Motor neuron (in vitro differentiated cells): ENCODE measurements at regions of chr17 and their contacts with region 1.

Region 1: DNA sequence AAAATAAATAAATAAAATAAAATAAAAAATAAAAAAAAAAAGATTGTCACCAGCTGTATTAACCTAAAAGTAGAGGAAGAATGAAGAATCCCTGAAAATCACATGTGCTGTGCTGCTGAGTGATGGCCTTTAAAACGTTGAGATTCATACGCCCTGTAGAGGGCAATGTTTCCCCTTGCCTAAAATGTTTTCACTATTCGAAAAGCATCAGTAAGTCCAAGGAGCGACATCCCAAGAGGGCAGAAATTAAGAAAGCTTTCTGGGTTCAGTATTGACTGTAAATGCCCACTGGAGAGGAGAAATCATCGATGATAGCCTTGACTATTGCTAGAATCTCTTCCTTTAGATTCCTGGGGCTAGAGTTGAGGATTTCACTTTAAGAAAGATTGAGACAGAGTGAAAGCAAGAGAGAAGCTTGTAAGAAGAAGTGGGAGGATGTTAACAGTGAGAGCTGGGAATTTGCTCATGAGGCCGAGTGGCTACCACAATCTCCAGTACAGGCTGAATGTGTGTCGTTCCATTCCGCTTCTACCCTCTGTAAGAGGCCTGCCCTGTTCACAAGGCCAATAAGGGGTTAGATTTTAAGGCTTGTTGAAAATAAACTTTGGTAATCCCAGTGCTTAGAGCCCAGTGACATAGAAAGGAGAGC is 170.8 kb upstream of the FAM20A start:
- ATAC-seq: peak in 3 of 8 experiments; percentile 85 to 93 (median 92)
- H3K4me3 ChIP-seq: no peak overlapping the region
- H3K27ac ChIP-seq: no peak overlapping the region
- H3K4me1 ChIP-seq: no peaks in the 10 kb centered on the region

Region 2: GRCh38 chr17:68707031-68707430 is 65.0 kb before region 1 on chr17:
- in situ Hi-C with region 1: no loop called
- ATAC-seq: peak in 6 of 8 experiments; percentile 44 to 95 (median 72)
- H3K4me3 ChIP-seq: no peak overlapping the region
- H3K27ac ChIP-seq: no peak overlapping the region
- H3K4me1 ChIP-seq: peaks cover 3 to 8% of the 10 kb centered on the region in 2 donors

Region 3: DNA sequence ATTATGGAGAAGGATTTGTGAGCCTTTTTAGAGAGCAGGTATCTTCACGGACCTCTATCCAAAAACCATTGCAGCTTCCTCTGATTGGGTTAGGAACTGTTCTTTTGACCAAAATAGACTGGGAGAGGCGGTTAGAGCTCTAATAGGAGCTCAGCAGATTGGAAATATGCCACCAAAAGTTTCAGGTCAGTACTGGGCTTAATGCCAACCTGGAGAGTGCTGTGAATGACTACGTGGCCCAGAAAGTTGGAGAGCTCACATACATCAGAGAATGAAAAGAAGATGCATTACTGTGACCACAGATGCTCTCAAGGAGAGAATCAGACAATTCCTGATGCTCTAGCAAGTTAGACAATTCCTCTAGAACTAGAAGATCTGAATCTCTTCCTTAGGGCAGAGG is 96.7 kb after region 1 on chr17:
- in situ Hi-C with region 1: no loop called
- ATAC-seq: no peak
- H3K4me3 ChIP-seq: no peak overlapping the region
- H3K27ac ChIP-seq: no peak overlapping the region
- H3K4me1 ChIP-seq: no peaks in the 10 kb centered on the region

Region 4: DNA sequence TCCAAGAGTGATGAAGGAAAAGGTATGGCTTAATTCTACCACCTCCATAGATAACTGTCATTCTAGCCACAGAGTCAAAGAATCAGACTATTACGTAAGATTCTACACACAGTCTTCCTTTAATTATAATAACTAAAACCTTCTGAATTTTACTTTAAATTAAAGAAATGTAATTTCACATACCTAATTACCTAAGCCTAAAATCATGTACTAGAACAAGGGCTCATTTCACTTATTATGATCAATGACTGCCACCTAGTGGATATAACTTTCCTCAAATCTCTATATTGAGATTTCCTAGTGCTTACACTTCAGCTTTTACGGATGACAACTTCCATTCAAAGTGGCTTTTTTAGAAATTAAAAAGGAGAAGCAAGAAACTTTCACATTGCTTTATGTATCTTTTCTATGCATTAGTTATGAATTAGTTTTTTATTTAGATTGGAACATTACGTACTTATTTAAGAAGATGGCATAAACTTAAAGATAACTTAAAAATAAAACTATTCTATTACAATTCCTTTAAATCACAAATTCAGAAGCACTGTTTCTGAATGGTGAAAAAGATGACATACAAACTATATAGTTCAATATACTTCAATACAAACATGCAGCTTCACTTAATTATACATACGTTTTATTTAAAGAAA is 474.9 kb after region 1 on chr17:
- in situ Hi-C with region 1: loop called in 6 of 9 experiments (anchors 10 to 25 kb)
- ATAC-seq: peak in 3 of 8 experiments; percentile 51 to 59 (median 52)
- H3K4me3 ChIP-seq: no peak overlapping the region
- H3K27ac ChIP-seq: no peak overlapping the region
- H3K4me1 ChIP-seq: no peaks in the 10 kb centered on the region